Thyroid gland (tissue), 4 donors: ENCODE measurements at regions of chrX and their contacts with region 1.

Region 1: DNA sequence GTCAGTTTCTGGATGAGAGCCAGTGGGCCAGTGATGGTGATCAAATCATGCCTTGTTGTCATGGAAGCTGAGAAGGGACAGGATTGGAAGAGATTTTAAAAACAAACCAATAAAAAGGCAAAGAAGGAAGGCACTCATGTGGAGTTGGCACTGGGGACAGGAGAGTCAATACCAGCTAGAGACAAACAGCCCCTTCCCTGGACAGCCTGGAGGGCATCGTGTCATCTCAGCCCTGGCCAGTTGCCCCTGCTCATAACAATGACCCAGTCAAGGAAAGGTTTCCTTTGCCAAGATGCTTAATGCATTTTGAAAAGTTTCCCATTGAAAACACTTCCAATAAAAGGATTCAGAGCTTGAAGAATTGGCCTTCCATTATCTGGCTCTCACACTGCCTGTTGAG is 55.5 kb downstream of the SCML1 start:
- DNase-seq: peak in 1 of 2 donors; percentile 8
- H3K4me3 ChIP-seq: no peak overlapping the region
- H3K27ac ChIP-seq: no peak overlapping the region
- H3K4me1 ChIP-seq: peaks cover 0 to 6% of the 10 kb centered on the region in 2 donors
- H3K27me3 ChIP-seq: no peaks in the 10 kb centered on the region
- CTCF ChIP-seq: no peak
- POLR2A ChIP-seq: no peak

Region 2: GRCh38 chrX:17299206-17299605 is 493.6 kb before region 1 on chrX:
- intact Hi-C with region 1: no loop called
- DNase-seq: no peak
- H3K4me3 ChIP-seq: no peak overlapping the region
- H3K27ac ChIP-seq: no peak overlapping the region
- H3K4me1 ChIP-seq: no peaks in the 10 kb centered on the region
- H3K27me3 ChIP-seq: no peaks in the 10 kb centered on the region
- CTCF ChIP-seq: no peak
- POLR2A ChIP-seq: no peak

Region 3: GRCh38 chrX:17559728-17560379 is 233.0 kb before region 1 on chrX:
- intact Hi-C with region 1: no loop called
- DNase-seq: peak; percentile 33
- H3K4me3 ChIP-seq: no peak overlapping the region
- H3K27ac ChIP-seq: peak overlapping the region in 2 of 3 donors; percentile 32 to 46
- H3K4me1 ChIP-seq: peaks cover 4 to 18% of the 10 kb centered on the region in 2 donors
- H3K27me3 ChIP-seq: no peaks in the 10 kb centered on the region
- CTCF ChIP-seq: no peak
- POLR2A ChIP-seq: no peak

Region 4: GRCh38 chrX:18203631-18204030 is 410.8 kb after region 1 on chrX:
- intact Hi-C with region 1: loop called (anchors 10 kb)
- DNase-seq: no peak
- H3K4me3 ChIP-seq: no peak overlapping the region
- H3K27ac ChIP-seq: no peak overlapping the region
- H3K4me1 ChIP-seq: no peaks in the 10 kb centered on the region
- H3K27me3 ChIP-seq: no peaks in the 10 kb centered on the region
- CTCF ChIP-seq: no peak
- POLR2A ChIP-seq: no peak